PC-3 (cell line): ENCODE measurements at regions of chr2 and their contacts with region 1.

Region 1: GRCh38 chr2:53422979-53423378 is 344.6 kb upstream of the CHAC2 start:
- DNase-seq: peak; percentile 68
- ATAC-seq: peak; percentile 81
- H3K4me3 ChIP-seq: no peak overlapping the region
- H3K27ac ChIP-seq: no peak overlapping the region
- H3K4me1 ChIP-seq: no peaks in the 10 kb centered on the region
- H3K27me3 ChIP-seq: no peaks in the 10 kb centered on the region
- CTCF ChIP-seq: peak; percentile 79

Region 2: DNA sequence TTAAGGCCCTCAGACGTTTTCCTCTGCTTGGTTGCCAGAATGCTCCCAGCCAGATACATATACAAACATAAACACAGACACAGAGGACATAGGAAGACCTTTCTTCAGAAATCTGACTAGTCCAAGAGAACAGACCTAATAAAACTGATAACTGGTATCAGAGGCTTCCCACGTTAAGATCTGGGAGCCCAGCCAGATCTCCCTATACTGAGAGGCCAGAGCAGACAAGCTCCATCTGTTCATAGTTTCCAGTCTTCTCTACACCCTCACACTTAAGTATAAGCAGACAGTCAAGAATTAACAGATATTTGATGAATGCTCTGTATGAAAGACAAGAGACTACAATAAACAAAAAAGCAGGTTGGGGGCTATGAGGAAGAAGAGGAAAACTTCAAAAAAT is 104.1 kb after region 1 on chr2:
- CTCF ChIA-PET with region 1: no interaction called
- POLR2A ChIA-PET with region 1: no interaction called
- intact Hi-C with region 1: no loop called
- DNase-seq: no peak
- ATAC-seq: no peak
- H3K4me3 ChIP-seq: no peak overlapping the region
- H3K27ac ChIP-seq: no peak overlapping the region
- H3K4me1 ChIP-seq: no peaks in the 10 kb centered on the region
- H3K27me3 ChIP-seq: no peaks in the 10 kb centered on the region
- CTCF ChIP-seq: no peak

Region 3: DNA sequence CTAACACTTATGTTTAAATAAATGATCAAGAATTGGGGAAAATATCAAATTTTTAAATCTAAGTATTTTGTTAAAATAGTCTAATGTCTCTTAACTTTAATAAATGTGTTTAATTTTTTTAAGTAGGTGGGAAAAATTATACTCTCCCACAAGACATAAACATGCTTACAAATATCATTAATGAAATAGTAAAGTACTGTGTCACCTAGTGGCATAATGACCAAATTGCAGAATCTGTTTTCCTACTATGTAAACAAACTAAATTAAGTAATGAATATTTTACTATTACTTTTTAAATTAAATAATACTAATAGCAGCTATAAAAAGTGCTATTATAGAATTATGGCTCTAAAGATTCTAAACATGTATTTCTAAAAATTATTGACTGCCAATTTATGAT is 292.6 kb after region 1 on chr2:
- CTCF ChIA-PET with region 1: no interaction called
- POLR2A ChIA-PET with region 1: no interaction called
- intact Hi-C with region 1: loop called (anchors 10 kb)
- DNase-seq: peak; percentile 49
- ATAC-seq: no peak
- H3K4me3 ChIP-seq: no peak overlapping the region
- H3K27ac ChIP-seq: no peak overlapping the region
- H3K4me1 ChIP-seq: 0 out of 2 replicates have a peak, but pooled peaks cover 4% of the 10 kb centered on the region
- H3K27me3 ChIP-seq: no peaks in the 10 kb centered on the region
- CTCF ChIP-seq: peak; percentile 59

Region 4: DNA sequence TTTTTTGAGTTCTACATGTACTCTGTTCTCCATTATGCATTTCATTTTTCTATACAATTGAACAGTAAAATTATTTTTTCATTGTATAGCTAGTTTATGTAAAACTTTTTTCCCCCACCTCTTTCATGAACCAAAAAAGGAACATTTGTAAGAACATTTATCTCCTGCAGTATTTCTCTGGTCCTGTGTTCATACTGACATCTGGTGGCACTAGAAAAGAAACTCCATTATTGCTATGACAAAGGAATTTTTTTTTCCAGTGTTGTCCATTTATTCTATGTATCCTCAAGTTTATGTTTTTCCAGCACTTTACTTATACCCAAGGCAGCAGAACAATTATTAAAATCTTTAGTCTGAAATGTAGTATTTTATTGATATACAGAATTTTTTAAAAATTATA is 317.2 kb after region 1 on chr2:
- CTCF ChIA-PET with region 1: no interaction called
- POLR2A ChIA-PET with region 1: no interaction called
- intact Hi-C with region 1: loop called (anchors 2 kb)
- DNase-seq: peak; percentile 49
- ATAC-seq: no peak
- H3K4me3 ChIP-seq: no peak overlapping the region
- H3K27ac ChIP-seq: no peak overlapping the region
- H3K4me1 ChIP-seq: 0 out of 2 replicates have a peak, but pooled peaks cover 4% of the 10 kb centered on the region
- H3K27me3 ChIP-seq: no peaks in the 10 kb centered on the region
- CTCF ChIP-seq: peak; percentile 68